Caco-2 (cell line): ENCODE measurements at regions of chr1 and their contacts with region 1.

Region 1: GRCh38 chr1:67760030-67760821 is 73.0 kb downstream of the GNG12 start:
- DNase-seq: peak; percentile 74 to 88
- H3K4me3 ChIP-seq: no peak overlapping the region
- H3K4me3 Mint-ChIP-seq: no peak overlapping the region
- H3K27ac Mint-ChIP-seq: peak overlapping the region; percentile 86
- H3K4me1 ChIP-seq: peaks cover 30% of the 10 kb centered on the region
- H3K4me1 Mint-ChIP-seq: peaks cover 7% of the 10 kb centered on the region
- H3K27me3 ChIP-seq: no peaks in the 10 kb centered on the region
- H3K27me3 Mint-ChIP-seq: no peaks in the 10 kb centered on the region
- CTCF ChIP-seq: peak; percentile 55 to 72

Region 2: DNA sequence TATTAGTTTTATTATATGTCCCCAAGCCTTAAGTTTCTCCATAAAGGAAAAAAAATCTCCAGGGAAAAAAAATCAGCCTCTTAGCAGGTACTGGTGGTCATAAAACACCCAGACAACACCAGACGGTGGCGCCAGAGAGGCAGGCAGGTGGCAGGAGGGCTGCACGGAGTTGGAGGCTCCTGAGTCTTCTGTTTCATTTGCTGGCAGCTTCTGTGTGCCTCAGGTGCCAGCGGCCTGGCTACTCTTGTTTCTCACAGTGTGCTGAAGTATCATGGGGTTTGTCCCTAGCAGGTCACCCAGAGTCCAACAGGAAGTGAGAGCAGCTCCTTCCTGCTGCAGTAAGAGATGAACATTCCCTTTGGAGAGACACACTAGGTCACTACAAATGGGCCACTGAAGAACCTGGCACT is 198.5 kb before region 1 on chr1:
- CTCF ChIA-PET with region 1: interaction called, 9 read pairs
- POLR2A ChIA-PET with region 1: interaction called, 3 read pairs
- intact Hi-C with region 1: loop called (anchors 1 kb)
- DNase-seq: peak; percentile 90 to 92
- H3K4me3 ChIP-seq: no peak overlapping the region
- H3K4me3 Mint-ChIP-seq: no peak overlapping the region
- H3K27ac Mint-ChIP-seq: no peak overlapping the region
- H3K4me1 ChIP-seq: peaks cover 16% of the 10 kb centered on the region; the same call in 1 of the 2 replicates
- H3K4me1 Mint-ChIP-seq: no peaks in the 10 kb centered on the region
- H3K27me3 ChIP-seq: no peaks in the 10 kb centered on the region
- H3K27me3 Mint-ChIP-seq: no peaks in the 10 kb centered on the region
- CTCF ChIP-seq: peak; percentile 73 to 77

Region 3: DNA sequence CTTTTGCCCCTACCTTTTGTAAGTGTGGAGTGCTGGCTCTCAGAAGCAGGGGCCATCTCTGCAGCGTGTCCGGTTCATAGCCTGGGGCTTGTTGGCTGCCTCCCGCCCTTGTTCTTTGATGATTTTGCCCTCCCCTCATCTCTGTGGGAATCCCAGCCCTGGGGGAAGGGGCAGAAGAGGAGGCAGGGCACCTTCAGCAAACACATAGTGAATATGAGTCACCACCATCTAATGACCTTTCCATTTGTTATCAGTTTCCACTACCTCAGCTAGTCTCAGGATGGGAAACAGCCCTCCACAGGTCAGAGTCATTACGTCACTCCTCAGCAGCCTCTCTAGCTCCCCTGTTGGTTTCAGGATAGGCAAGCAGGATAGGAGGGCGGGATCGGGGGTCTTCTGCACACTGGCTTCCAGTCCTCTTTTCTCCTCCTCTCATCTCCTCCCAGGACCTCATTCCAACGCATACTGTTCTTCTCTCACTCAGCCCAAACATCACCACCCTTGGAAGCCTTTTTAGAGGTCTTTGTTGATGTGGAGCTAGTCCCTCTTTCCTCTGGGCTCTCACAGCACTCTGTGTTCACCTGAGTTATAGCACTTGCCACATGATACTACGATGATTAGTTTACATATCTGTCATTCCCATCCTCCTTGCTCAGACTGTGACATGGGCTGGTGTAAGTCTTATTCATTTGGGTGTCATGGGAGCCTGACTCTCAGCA is 59.4 kb before region 1 on chr1:
- CTCF ChIA-PET with region 1: interaction called, 6 read pairs
- POLR2A ChIA-PET with region 1: no interaction called
- intact Hi-C with region 1: loop called (anchors 1 kb)
- DNase-seq: peak; percentile 85 to 90
- H3K4me3 ChIP-seq: no peak overlapping the region
- H3K4me3 Mint-ChIP-seq: peak overlapping the region; percentile 65
- H3K27ac Mint-ChIP-seq: peak overlapping the region; percentile 96
- H3K4me1 ChIP-seq: peaks cover 19% of the 10 kb centered on the region
- H3K4me1 Mint-ChIP-seq: peaks cover 15% of the 10 kb centered on the region
- H3K27me3 ChIP-seq: no peaks in the 10 kb centered on the region
- H3K27me3 Mint-ChIP-seq: no peaks in the 10 kb centered on the region
- CTCF ChIP-seq: peak; percentile 39 to 60

Region 4: DNA sequence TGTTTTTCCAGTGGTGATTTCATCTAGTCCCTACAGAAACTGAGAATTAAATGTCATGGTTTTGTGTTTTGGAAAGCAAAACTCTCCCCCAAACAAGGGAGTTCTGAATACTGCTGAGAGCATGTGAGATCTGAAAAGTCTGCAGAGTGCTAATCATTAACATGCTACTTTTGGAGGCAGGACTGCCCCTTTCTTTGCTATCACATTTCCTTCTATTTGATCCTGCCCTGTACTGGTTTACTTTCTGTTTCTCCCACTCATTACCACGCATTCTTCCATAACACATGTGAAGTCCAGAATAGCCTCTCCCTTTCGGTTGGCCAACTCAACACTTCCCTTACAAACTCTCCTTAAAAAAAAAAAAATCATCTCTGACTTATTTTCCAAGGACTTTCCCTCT is 11.6 kb before region 1 on chr1:
- CTCF ChIA-PET with region 1: interaction called, 6 read pairs
- POLR2A ChIA-PET with region 1: no interaction called
- intact Hi-C with region 1: loop called (anchors 1 kb)
- DNase-seq: peak; percentile 42 to 51
- H3K4me3 ChIP-seq: peak overlapping the region; percentile 9
- H3K4me3 Mint-ChIP-seq: peak overlapping the region; percentile 69
- H3K27ac Mint-ChIP-seq: peak overlapping the region; percentile 69
- H3K4me1 ChIP-seq: peaks cover 80% of the 10 kb centered on the region
- H3K4me1 Mint-ChIP-seq: peaks cover 30% of the 10 kb centered on the region
- H3K27me3 ChIP-seq: no peaks in the 10 kb centered on the region
- H3K27me3 Mint-ChIP-seq: no peaks in the 10 kb centered on the region
- CTCF ChIP-seq: no peak

Region 5: GRCh38 chr1:67771152-67771551 is 10.9 kb after region 1 on chr1:
- CTCF ChIA-PET with region 1: no interaction called
- POLR2A ChIA-PET with region 1: no interaction called
- intact Hi-C with region 1: no loop called
- DNase-seq: no peak
- H3K4me3 ChIP-seq: no peak overlapping the region
- H3K4me3 Mint-ChIP-seq: no peak overlapping the region
- H3K27ac Mint-ChIP-seq: no peak overlapping the region
- H3K4me1 ChIP-seq: no peaks in the 10 kb centered on the region
- H3K4me1 Mint-ChIP-seq: peaks cover 8% of the 10 kb centered on the region
- H3K27me3 ChIP-seq: no peaks in the 10 kb centered on the region
- H3K27me3 Mint-ChIP-seq: no peaks in the 10 kb centered on the region
- CTCF ChIP-seq: peak; percentile 5 to 24